ENCODE measurements at regions of chr15 and their contacts with region 1.

Region 1: GRCh38 chr15:64731012-64731806 is 44.2 kb downstream of the RBPMS2 start:
- DNase-seq: peak; percentile 77 to 83 (median 80)
- H3K4me3 ChIP-seq: no peak overlapping the region
- H3K4me3 Mint-ChIP-seq: no peak overlapping the region
- H3K27ac ChIP-seq: no peak overlapping the region
- H3K27ac Mint-ChIP-seq: peak overlapping the region in 1 of 7 donors; percentile 72
- H3K4me1 ChIP-seq: peaks cover 4% of the 10 kb centered on the region
- H3K4me1 Mint-ChIP-seq: peaks cover 7 to 13% (median 10%) of the 10 kb centered on the region in 4 donors
- H3K27me3 ChIP-seq: no peaks in the 10 kb centered on the region
- H3K27me3 Mint-ChIP-seq: peaks cover 0 to 4% of the 10 kb centered on the region in 2 donors

Region 2: DNA sequence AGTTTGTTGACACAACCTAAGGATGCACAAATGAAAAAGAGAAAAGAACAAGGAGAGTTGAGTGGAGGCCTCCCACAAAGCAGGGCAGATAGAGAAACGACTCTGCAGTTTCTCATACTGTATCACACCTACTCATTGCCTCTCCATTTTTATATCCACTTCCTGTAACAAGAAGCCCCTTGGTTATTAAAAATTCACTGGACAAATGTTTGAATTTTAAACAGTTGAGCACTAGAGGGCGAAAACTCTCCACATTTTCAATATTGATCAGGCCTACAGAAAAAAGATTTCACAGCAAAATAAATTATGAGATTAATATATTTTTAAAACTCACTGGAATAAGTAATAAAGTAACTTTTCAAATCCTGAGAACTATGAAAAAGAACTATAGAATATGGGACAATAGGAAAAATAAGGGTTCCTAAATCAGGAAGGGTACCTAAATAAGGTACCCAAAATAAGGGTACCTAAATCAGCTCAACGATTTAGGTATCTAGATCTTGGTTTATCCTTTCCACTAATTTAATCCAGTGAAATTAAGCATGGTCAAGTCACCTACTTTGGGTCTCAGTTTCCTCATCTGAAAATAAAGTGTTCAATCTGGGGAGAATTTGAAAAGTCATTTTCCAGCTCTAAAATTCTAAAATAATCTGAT is 521.4 kb before region 1 on chr15:
- CTCF ChIA-PET with region 1: interaction called, 5 read pairs
- POLR2A ChIA-PET with region 1: no interaction called
- intact Hi-C with region 1: loop called (anchors 1 kb)
- DNase-seq: peak in 3 of 5 donors; percentile 3 to 11 (median 10)
- H3K4me3 ChIP-seq: no peak overlapping the region
- H3K4me3 Mint-ChIP-seq: no peak overlapping the region
- H3K27ac ChIP-seq: no peak overlapping the region
- H3K27ac Mint-ChIP-seq: peak overlapping the region in 2 of 7 donors; percentile 12 to 22
- H3K4me1 ChIP-seq: no peaks in the 10 kb centered on the region
- H3K4me1 Mint-ChIP-seq: peaks cover 0 to 1% (median 0%) of the 10 kb centered on the region in 4 donors
- H3K27me3 ChIP-seq: no peaks in the 10 kb centered on the region
- H3K27me3 Mint-ChIP-seq: no peaks in the 10 kb centered on the region

Region 3: GRCh38 chr15:64673866-64674265 is 57.3 kb before region 1 on chr15:
- CTCF ChIA-PET with region 1: interaction called, 509 read pairs
- POLR2A ChIA-PET with region 1: no interaction called
- intact Hi-C with region 1: no loop called
- DNase-seq: no peak
- H3K4me3 ChIP-seq: no peak overlapping the region
- H3K4me3 Mint-ChIP-seq: no peak overlapping the region
- H3K27ac ChIP-seq: no peak overlapping the region
- H3K27ac Mint-ChIP-seq: no peak overlapping the region
- H3K4me1 ChIP-seq: no peaks in the 10 kb centered on the region
- H3K4me1 Mint-ChIP-seq: peaks cover 0 to 5% (median 2%) of the 10 kb centered on the region in 4 donors
- H3K27me3 ChIP-seq: no peaks in the 10 kb centered on the region
- H3K27me3 Mint-ChIP-seq: no peaks in the 10 kb centered on the region

Region 4: DNA sequence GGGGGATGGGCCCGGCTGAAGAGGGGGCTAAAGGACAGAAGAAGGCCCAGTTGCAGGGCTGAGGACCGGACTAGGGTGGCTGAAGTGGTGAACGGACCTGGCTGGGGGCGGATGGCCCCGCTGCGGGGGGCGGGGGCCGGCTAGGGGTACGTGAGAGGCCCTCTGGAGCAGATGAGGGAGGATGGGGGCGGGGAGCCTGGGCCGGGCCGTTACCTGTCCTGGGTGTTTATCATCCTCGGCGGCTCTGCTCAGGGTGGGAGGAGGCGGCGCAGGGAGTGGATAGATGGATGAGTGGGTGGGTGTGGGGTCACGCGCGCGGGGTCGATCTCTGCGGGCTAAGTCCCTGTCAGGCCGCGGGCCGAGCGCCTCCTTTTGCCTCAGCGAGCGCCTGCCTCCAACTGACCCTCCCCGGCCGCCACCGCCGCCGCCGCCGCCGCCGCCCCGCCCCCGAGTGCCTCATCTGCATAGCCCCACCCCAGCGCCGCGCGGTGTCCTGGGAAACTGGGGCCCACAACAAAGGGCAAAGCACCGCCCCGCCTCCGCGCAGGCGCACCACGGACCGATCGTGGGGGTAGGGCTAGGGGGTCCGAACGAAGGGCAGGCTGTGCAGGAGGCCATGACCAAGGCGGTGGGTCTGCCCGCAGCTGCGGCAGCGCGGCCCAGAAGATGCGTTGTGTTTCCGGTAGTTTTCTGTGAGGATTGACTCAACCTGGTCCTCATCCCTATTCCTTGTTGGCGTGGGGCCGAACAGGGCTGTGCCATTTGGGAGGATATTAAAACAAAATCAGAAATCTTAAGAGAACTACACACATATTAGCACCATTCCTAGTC is 28.2 kb before region 1 on chr15:
- CTCF ChIA-PET with region 1: interaction called, 509 read pairs
- POLR2A ChIA-PET with region 1: no interaction called
- intact Hi-C with region 1: no loop called
- DNase-seq: peak; percentile 91 to 94 (median 91)
- H3K4me3 ChIP-seq: peak overlapping the region; percentile 54 to 84
- H3K4me3 Mint-ChIP-seq: peak overlapping the region; percentile 79 to 95 (median 92)
- H3K27ac ChIP-seq: peak overlapping the region; percentile 73
- H3K27ac Mint-ChIP-seq: peak overlapping the region; percentile 44 to 95 (median 92)
- H3K4me1 ChIP-seq: peaks cover 52% of the 10 kb centered on the region
- H3K4me1 Mint-ChIP-seq: peaks cover 45 to 59% (median 52%) of the 10 kb centered on the region in 4 donors
- H3K27me3 ChIP-seq: no peaks in the 10 kb centered on the region
- H3K27me3 Mint-ChIP-seq: no peaks in the 10 kb centered on the region

Region 5: GRCh38 chr15:64836023-64836536 is 104.9 kb after region 1 on chr15:
- CTCF ChIA-PET with region 1: interaction called, 19 read pairs
- POLR2A ChIA-PET with region 1: interaction called, 4 read pairs
- intact Hi-C with region 1: loop called (anchors 1 kb)
- DNase-seq: no peak
- H3K4me3 ChIP-seq: peak overlapping the region in 1 of 2 donors; percentile 23
- H3K4me3 Mint-ChIP-seq: peak overlapping the region; percentile 49 to 79 (median 65)
- H3K27ac ChIP-seq: no peak overlapping the region
- H3K27ac Mint-ChIP-seq: peak overlapping the region; percentile 40 to 88 (median 80)
- H3K4me1 ChIP-seq: peaks cover 60% of the 10 kb centered on the region
- H3K4me1 Mint-ChIP-seq: peaks cover 37 to 54% (median 44%) of the 10 kb centered on the region in 4 donors
- H3K27me3 ChIP-seq: no peaks in the 10 kb centered on the region
- H3K27me3 Mint-ChIP-seq: no peaks in the 10 kb centered on the region

Region 6: GRCh38 chr15:65077981-65078352 is 346.8 kb after region 1 on chr15:
- CTCF ChIA-PET with region 1: interaction called, 3 read pairs
- POLR2A ChIA-PET with region 1: no interaction called
- intact Hi-C with region 1: loop called (anchors 1 kb)
- DNase-seq: peak in 4 of 5 donors; percentile 24 to 45 (median 38)
- H3K4me3 ChIP-seq: no peak overlapping the region
- H3K4me3 Mint-ChIP-seq: peak overlapping the region in 3 of 8 donors; percentile 36 to 66 (median 53)
- H3K27ac ChIP-seq: no peak overlapping the region
- H3K27ac Mint-ChIP-seq: peak overlapping the region in 2 of 7 donors; percentile 23 to 48
- H3K4me1 ChIP-seq: peaks cover 10% of the 10 kb centered on the region
- H3K4me1 Mint-ChIP-seq: peaks cover 13 to 21% (median 16%) of the 10 kb centered on the region in 4 donors
- H3K27me3 ChIP-seq: no peaks in the 10 kb centered on the region
- H3K27me3 Mint-ChIP-seq: peaks cover 23 to 37% of the 10 kb centered on the region in 2 donors